ENCODE measurements at regions of chr3 and their contacts with region 1.

Region 1: GRCh38 chr3:68088216-68088615 is 433.8 kb upstream of the SUCLG2 start:
- DNase-seq: no peak
- H3K4me3 ChIP-seq: no peak overlapping the region
- CTCF ChIP-seq: no peak
- POLR2A ChIP-seq: no peak

Region 2: GRCh38 chr3:67678665-67679064 is 409.6 kb before region 1 on chr3:
- intact Hi-C with region 1: loop called (anchors 10 kb)
- DNase-seq: no peak
- H3K4me3 ChIP-seq: no peak overlapping the region
- CTCF ChIP-seq: no peak
- POLR2A ChIP-seq: no peak